Left ventricle myocardium superior (tissue), 1 donor: ENCODE measurements at regions of chr7 and their contacts with region 1.

Region 1: GRCh38 chr7:20598459-20599309 is 16.8 kb upstream of the ABCB5 start:
- DNase-seq: no peak
- ATAC-seq: peak; percentile 59

Region 2: DNA sequence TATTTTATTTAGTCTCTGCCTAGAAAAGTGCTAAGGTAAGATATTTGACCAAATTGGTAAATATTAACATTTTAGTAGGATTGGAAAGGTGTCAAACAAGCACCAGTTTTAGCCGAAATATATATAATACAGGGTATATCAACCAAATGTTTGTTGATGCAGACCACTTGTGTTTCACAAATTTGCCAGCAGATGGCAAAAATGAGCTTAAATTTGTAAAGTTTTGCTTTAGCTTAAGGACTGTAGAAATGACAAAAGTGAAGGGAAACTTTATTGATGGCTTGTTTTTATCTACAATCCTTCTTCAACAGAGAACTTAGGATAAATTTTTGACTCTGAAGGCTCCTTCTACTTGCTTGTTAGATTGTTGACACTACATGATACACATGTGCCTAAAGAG is 885.0 kb before region 1 on chr7:
- intact Hi-C with region 1: loop called (anchors 10 kb)
- DNase-seq: no peak
- ATAC-seq: no peak

Region 3: GRCh38 chr7:19747740-19748339 is 850.8 kb before region 1 on chr7:
- intact Hi-C with region 1: loop called (anchors 10 kb)
- DNase-seq: no peak
- ATAC-seq: no peak

Region 4: GRCh38 chr7:20158684-20159083 is 440.0 kb before region 1 on chr7:
- intact Hi-C with region 1: loop called (anchors 5 kb)
- DNase-seq: no peak
- ATAC-seq: peak; percentile 70